ENCODE measurements at regions of chr5 and their contacts with region 1.

Region 1: GRCh38 chr5:170080217-170080616 is 25.5 kb upstream of the FOXI1 start:
- DNase-seq: no peak
- ATAC-seq: no peak
- H3K4me3 ChIP-seq: no peak overlapping the region
- H3K27ac ChIP-seq: no peak overlapping the region
- H3K4me1 ChIP-seq: no peaks in the 10 kb centered on the region
- H3K27me3 ChIP-seq: no peaks in the 10 kb centered on the region

Region 2: GRCh38 chr5:170267431-170268152 is 187.4 kb after region 1 on chr5:
- intact Hi-C with region 1: no loop called
- DNase-seq: peak; percentile 75 to 88 (median 85)
- ATAC-seq: peak; percentile 69 to 81
- H3K4me3 ChIP-seq: no peak overlapping the region
- H3K27ac ChIP-seq: no peak overlapping the region
- H3K4me1 ChIP-seq: no peaks in the 10 kb centered on the region
- H3K27me3 ChIP-seq: no peaks in the 10 kb centered on the region

Region 3: DNA sequence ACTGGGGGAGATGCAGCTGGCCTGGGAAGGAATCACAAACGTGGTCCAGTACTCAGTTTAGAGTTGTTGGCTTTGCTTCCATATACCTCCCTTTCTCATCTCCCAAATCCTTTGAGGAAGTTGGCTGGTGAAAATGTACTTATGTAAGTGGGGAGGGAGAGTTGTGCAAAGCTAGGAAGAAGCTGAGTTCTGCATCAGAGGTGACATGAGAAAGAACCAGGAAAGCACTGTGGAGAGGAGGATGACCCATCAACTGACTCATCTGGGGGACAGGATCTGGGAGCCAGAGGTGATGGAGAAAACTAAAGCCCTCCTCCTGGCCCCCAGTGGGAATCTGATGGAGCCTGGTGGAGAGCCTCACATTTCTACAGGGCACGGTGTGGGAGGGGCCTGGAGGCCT is 292.8 kb after region 1 on chr5:
- intact Hi-C with region 1: loop called in 1 of 4 experiments (anchors 10 kb)
- DNase-seq: no peak
- ATAC-seq: no peak
- H3K4me3 ChIP-seq: no peak overlapping the region
- H3K27ac ChIP-seq: no peak overlapping the region
- H3K4me1 ChIP-seq: no peaks in the 10 kb centered on the region
- H3K27me3 ChIP-seq: no peaks in the 10 kb centered on the region

Measured in right cardiac atrium (tissue), 5 donors.